ENCODE measurements at regions of chr5 and their contacts with region 1.

Region 1: GRCh38 chr5:174935854-174936474 is 211.6 kb downstream of the MSX2 start:
- DNase-seq: peak; percentile 26 to 67 (median 52)
- H3K4me3 ChIP-seq: no peak overlapping the region
- H3K27ac ChIP-seq: no peak overlapping the region
- H3K4me1 ChIP-seq: no peaks in the 10 kb centered on the region
- H3K27me3 ChIP-seq: no peaks in the 10 kb centered on the region
- CTCF ChIP-seq: peak; percentile 57 to 89 (median 70)
- POLR2A ChIP-seq: no peak

Region 2: DNA sequence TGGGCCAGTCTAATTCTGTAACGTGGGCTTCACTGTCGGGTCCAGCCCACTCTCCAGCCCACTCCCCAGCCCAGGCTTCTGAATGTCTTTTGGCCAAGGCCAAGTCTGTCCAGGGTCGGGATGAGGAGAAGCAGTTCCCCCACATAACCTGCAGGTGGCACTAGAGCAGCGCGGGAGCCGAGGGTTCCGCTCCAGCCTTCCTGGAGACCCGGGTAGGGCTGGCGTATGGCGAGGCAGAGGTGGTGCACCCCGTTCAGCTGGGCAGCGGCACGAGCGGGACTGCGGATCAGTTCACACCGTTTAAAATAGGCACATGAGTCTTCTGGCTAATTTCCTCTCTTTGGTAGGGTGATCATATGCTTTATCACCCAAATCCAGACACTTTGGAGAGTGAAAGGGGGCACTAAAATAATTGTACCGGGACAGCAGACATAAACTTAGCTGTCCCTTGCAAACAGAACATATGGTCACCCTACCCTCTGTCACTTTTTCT is 25.7 kb before region 1 on chr5:
- intact Hi-C with region 1: loop called in 1 of 2 experiments (anchors 2 kb)
- DNase-seq: peak; percentile 49 to 75 (median 63)
- H3K4me3 ChIP-seq: no peak overlapping the region
- H3K27ac ChIP-seq: no peak overlapping the region
- H3K4me1 ChIP-seq: no peaks in the 10 kb centered on the region
- H3K27me3 ChIP-seq: peaks cover 3% of the 10 kb centered on the region
- CTCF ChIP-seq: peak; percentile 69 to 89 (median 79)
- POLR2A ChIP-seq: no peak

Region 3: GRCh38 chr5:174953871-174954270 is 17.9 kb after region 1 on chr5:
- intact Hi-C with region 1: no loop called
- DNase-seq: no peak
- H3K4me3 ChIP-seq: no peak overlapping the region
- H3K27ac ChIP-seq: no peak overlapping the region
- H3K4me1 ChIP-seq: no peaks in the 10 kb centered on the region
- H3K27me3 ChIP-seq: peaks cover 4% of the 10 kb centered on the region
- CTCF ChIP-seq: no peak
- POLR2A ChIP-seq: no peak